Endothelial cell of umbilical vein (primary cell): ENCODE measurements at regions of chr20 and their contacts with region 1.

Region 1: GRCh38 chr20:21235484-21236445 is 67.4 kb upstream of the XRN2 start:
- DNase-seq: peak; percentile 74
- H3K4me3 ChIP-seq: no peak overlapping the region
- H3K27ac ChIP-seq: no peak overlapping the region
- H3K4me1 ChIP-seq: no peaks in the 10 kb centered on the region
- H3K27me3 ChIP-seq: no peaks in the 10 kb centered on the region
- CTCF ChIP-seq: peak; percentile 67 to 94
- POLR2A ChIP-seq: no peak

Region 2: GRCh38 chr20:20837574-20838021 is 398.2 kb before region 1 on chr20:
- CTCF ChIA-PET with region 1: interaction called, 8 read pairs
- POLR2A ChIA-PET with region 1: no interaction called
- dilution Hi-C with region 1: no loop called
- intact Hi-C with region 1: loop called (anchors 2 kb)
- DNase-seq: peak; percentile 59
- H3K4me3 ChIP-seq: no peak overlapping the region
- H3K27ac ChIP-seq: no peak overlapping the region
- H3K4me1 ChIP-seq: no peaks in the 10 kb centered on the region
- H3K27me3 ChIP-seq: peaks cover 0 to 3% of the 10 kb centered on the region in 2 experiments
- CTCF ChIP-seq: peak; percentile 64 to 77
- POLR2A ChIP-seq: no peak

Region 3: GRCh38 chr20:20956513-20956931 is 279.2 kb before region 1 on chr20:
- CTCF ChIA-PET with region 1: no interaction called
- POLR2A ChIA-PET with region 1: no interaction called
- dilution Hi-C with region 1: no loop called
- intact Hi-C with region 1: no loop called
- DNase-seq: no peak
- H3K4me3 ChIP-seq: no peak overlapping the region
- H3K27ac ChIP-seq: no peak overlapping the region
- H3K4me1 ChIP-seq: no peaks in the 10 kb centered on the region
- H3K27me3 ChIP-seq: no peaks in the 10 kb centered on the region
- CTCF ChIP-seq: no peak
- POLR2A ChIP-seq: no peak

Region 4: DNA sequence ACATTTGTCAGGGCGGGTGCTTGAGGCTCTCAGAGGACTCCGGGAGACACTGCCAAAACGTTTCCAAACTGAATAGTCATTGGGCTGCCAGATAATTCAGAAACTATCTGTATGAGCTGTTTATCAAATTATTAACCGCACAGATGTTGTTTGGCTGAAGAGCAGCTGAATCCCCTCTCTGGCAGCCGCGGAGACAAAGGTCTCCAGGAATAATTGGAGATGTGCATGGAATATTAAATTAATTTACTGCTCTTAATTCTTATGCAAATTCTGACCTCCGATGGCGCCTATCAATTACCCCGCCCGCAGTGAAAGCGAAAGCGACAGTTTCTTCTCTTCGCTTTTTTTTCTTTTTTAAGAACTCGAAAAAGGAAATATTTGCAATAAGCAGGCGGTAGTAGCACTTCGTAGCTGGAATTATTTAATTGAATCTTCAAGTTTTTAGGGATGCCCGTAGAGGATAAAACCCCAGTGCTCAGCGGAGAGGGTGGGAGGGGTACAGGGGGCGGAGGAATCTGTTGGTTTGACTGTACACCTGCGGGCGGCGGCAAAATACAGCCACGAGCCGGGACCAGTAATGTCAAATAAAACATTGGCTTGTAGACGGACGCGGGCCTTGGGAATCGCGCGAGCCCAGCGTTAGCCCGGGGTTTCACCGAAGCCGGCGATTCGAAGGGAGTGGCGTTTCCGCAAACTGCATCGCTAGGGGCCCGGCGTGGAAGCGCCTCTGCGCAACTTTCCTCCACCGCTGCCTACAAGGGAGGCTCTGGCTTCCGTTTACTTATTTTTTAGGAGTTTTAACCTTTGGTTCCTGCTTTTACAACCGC is 135.8 kb before region 1 on chr20:
- CTCF ChIA-PET with region 1: no interaction called
- POLR2A ChIA-PET with region 1: no interaction called
- dilution Hi-C with region 1: no loop called
- intact Hi-C with region 1: loop called (anchors 5 kb)
- DNase-seq: no peak
- H3K4me3 ChIP-seq: peak overlapping the region in 2 of 3 experiments; percentile 16 to 19
- H3K27ac ChIP-seq: no peak overlapping the region
- H3K4me1 ChIP-seq: peaks cover 13% of the 10 kb centered on the region
- H3K27me3 ChIP-seq: peaks cover 70 to 89% of the 10 kb centered on the region in 2 experiments
- CTCF ChIP-seq: no peak
- POLR2A ChIP-seq: no peak

Region 5: GRCh38 chr20:21156266-21156665 is 79.5 kb before region 1 on chr20:
- CTCF ChIA-PET with region 1: no interaction called
- POLR2A ChIA-PET with region 1: no interaction called
- dilution Hi-C with region 1: no loop called
- intact Hi-C with region 1: no loop called
- DNase-seq: no peak
- H3K4me3 ChIP-seq: no peak overlapping the region
- H3K27ac ChIP-seq: no peak overlapping the region
- H3K4me1 ChIP-seq: no peaks in the 10 kb centered on the region
- H3K27me3 ChIP-seq: no peaks in the 10 kb centered on the region
- CTCF ChIP-seq: no peak
- POLR2A ChIP-seq: no peak

Region 6: DNA sequence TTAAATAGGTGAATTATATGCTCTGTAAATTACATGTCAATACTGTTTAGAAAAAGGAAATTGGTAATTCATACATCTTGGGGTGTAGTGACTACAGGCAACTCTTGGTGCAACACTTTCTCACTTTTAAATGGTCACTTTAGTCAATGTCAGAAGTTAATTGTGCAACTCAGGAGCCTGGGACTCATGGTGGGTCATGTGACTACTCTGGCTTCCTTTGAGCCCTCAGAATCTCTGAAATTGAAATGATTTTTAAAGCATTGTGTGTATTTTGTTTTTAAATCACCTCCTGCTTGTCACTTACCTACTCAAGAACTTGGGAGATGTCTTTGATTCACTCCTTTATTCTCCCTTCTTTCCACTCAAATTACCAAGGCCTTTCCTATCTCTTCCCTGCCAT is 13.4 kb after region 1 on chr20:
- CTCF ChIA-PET with region 1: interaction called, 10 read pairs
- POLR2A ChIA-PET with region 1: no interaction called
- dilution Hi-C with region 1: no loop called
- intact Hi-C with region 1: no loop called
- DNase-seq: no peak
- H3K4me3 ChIP-seq: no peak overlapping the region
- H3K27ac ChIP-seq: no peak overlapping the region
- H3K4me1 ChIP-seq: no peaks in the 10 kb centered on the region
- H3K27me3 ChIP-seq: no peaks in the 10 kb centered on the region
- CTCF ChIP-seq: no peak
- POLR2A ChIP-seq: no peak

Region 7: DNA sequence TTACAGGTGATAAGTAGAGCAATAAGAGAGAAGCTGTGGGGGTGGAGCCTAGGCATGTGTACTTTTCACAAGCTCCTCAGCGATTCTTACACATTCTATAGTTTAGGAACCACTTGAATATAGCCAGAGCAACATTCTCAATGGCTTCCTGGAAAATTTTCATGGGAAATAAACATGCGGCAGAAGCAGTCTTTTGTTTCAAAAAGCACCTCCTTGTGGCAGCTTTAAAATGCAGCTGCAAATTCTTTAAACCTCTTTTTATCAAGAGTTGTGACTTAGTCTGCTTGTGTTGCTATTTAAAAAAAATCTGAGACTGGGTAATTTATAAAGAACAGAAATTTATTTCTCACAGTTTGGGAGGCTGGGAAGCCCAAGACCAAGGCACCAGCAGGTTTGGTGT is 254.3 kb after region 1 on chr20:
- CTCF ChIA-PET with region 1: interaction called, 155 read pairs
- POLR2A ChIA-PET with region 1: no interaction called
- dilution Hi-C with region 1: no loop called
- intact Hi-C with region 1: loop called (anchors 1 kb)
- DNase-seq: peak; percentile 25
- H3K4me3 ChIP-seq: no peak overlapping the region
- H3K27ac ChIP-seq: no peak overlapping the region
- H3K4me1 ChIP-seq: no peaks in the 10 kb centered on the region
- H3K27me3 ChIP-seq: peaks cover 6 to 8% of the 10 kb centered on the region in 2 experiments
- CTCF ChIP-seq: no peak
- POLR2A ChIP-seq: no peak

Region 8: GRCh38 chr20:21571841-21572690 is 336.3 kb after region 1 on chr20:
- CTCF ChIA-PET with region 1: interaction called, 17 read pairs
- POLR2A ChIA-PET with region 1: no interaction called
- dilution Hi-C with region 1: no loop called
- intact Hi-C with region 1: loop called (anchors 1 kb)
- DNase-seq: peak; percentile 18
- H3K4me3 ChIP-seq: no peak overlapping the region
- H3K27ac ChIP-seq: no peak overlapping the region
- H3K4me1 ChIP-seq: no peaks in the 10 kb centered on the region
- H3K27me3 ChIP-seq: no peaks in the 10 kb centered on the region
- CTCF ChIP-seq: peak; percentile 63 to 85
- POLR2A ChIP-seq: no peak